PC-3 (cell line): ENCODE measurements at regions of chr17 and their contacts with region 1.

Region 1: DNA sequence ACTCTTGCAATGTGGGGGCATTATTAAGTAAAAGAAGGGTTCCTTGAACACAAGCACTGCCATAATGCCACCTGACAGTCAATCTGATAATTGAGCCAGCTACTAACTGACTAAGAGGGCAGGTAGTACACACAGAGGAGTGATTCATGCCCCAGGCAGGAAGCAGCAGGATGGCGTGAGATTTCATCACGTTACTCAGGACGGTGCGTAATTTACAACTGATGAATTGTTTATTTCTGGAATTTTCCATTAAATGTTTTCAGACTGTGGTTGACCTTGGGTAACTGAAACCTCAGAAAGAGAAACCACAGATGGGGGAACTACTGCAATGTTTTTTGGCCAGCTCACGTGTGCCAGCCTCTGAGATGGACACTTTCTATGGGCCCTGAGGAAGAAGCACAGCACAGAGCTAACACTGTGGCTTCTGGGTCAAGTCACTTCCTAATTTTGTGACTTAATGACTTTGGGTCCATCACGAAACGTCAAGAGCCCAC is 46.7 kb downstream of the C17orf67 start:
- DNase-seq: peak; percentile 99
- ATAC-seq: peak; percentile 79
- H3K4me3 ChIP-seq: peak overlapping the region; percentile 4; the same call in 1 of the 2 replicates
- H3K27ac ChIP-seq: peak overlapping the region; percentile 98
- H3K4me1 ChIP-seq: peaks cover 45% of the 10 kb centered on the region
- H3K27me3 ChIP-seq: no peaks in the 10 kb centered on the region
- CTCF ChIP-seq: no peak

Region 2: DNA sequence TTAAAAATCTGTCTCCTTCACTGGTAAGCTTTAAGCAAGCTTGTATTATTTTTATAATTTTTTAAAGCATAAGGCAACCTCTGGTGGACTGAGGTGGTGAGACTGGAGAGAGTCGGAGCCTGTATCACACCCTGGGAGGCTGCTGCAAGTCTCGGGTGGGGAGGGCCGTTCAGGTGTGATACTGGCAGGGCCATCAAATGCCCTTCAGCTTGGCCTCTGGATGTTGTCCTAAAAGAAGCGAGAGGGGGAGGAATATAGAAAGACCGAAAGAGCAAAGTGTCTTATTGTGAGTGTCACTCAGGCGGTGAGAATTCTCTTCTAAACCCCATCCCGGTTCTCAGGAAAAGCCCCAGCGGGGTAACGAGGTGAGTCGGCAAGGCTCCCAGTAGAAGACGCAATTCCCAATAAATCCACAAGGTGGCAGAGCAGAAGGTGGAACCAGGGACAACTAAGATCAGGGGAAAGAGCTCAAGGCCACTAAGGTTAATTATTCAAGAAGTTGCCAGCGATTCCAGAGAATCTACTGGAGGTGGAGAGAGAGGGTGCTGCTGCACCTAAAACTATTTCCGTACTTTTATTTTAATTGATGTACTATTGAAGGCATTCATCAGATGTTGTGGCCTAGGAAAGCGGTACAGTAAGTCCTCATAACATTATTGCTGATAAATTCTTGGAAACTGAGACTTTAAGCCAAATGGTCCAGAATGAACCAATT is 32.6 kb after region 1 on chr17:
- CTCF ChIA-PET with region 1: interaction called, 3 read pairs
- POLR2A ChIA-PET with region 1: no interaction called
- intact Hi-C with region 1: loop called (anchors 1 kb)
- DNase-seq: peak; percentile 95
- ATAC-seq: peak; percentile 83
- H3K4me3 ChIP-seq: peak overlapping the region; percentile 46; the same call in 1 of the 2 replicates
- H3K27ac ChIP-seq: no peak overlapping the region
- H3K4me1 ChIP-seq: no peaks in the 10 kb centered on the region
- H3K27me3 ChIP-seq: no peaks in the 10 kb centered on the region
- CTCF ChIP-seq: peak; percentile 92

Region 3: GRCh38 chr17:56833809-56834379 is 46.9 kb after region 1 on chr17 and contains the starts of genes C17orf67 and DGKE:
- CTCF ChIA-PET with region 1: no interaction called
- POLR2A ChIA-PET with region 1: interaction called, 3 read pairs
- intact Hi-C with region 1: loop called (anchors 1 kb)
- DNase-seq: peak; percentile 98
- ATAC-seq: peak; percentile 79
- H3K4me3 ChIP-seq: peak within 1 kb of the TSS; percentile 74
- H3K27ac ChIP-seq: peak within 1 kb of the TSS; percentile 16
- H3K4me1 ChIP-seq: peaks cover 43% of the 10 kb centered on the region
- H3K27me3 ChIP-seq: no peaks in the 10 kb centered on the region
- CTCF ChIP-seq: no peak
- total RNA-seq, gene C17orf67: 2.3 and 4.4 TPM in 2 replicates
- total RNA-seq, gene DGKE: 8.4 and 12.4 TPM in 2 replicates

Region 4: GRCh38 chr17:56891784-56892183 is 104.7 kb after region 1 on chr17:
- CTCF ChIA-PET with region 1: no interaction called
- POLR2A ChIA-PET with region 1: no interaction called
- intact Hi-C with region 1: no loop called
- DNase-seq: no peak
- ATAC-seq: no peak
- H3K4me3 ChIP-seq: no peak overlapping the region
- H3K27ac ChIP-seq: no peak overlapping the region
- H3K4me1 ChIP-seq: no peaks in the 10 kb centered on the region
- H3K27me3 ChIP-seq: no peaks in the 10 kb centered on the region
- CTCF ChIP-seq: peak; percentile 66